Activated T-helper 1 cell treated with anti-CD3 and anti-CD28 coated beads, Interleukin-12 subunit alpha, Interleukin-12 subunit beta, Interleukin-2, Interleukin-4 antibody, amounts not matched to agents 30 ng/mL and 10 ng/mL and 1 ng/mL, durations not matched to agents 14 hours and 24 hours and 36 hours (primary cell): ENCODE measurements at regions of chr19 and their contacts with region 1.

Region 1: GRCh38 chr19:860481-861101 is 1.1 kb downstream of the CFD start:
- DNase-seq: peak; percentile 36
- H3K4me3 Mint-ChIP-seq: no peak overlapping the region
- H3K27ac Mint-ChIP-seq: no peak overlapping the region
- H3K4me1 Mint-ChIP-seq: peaks cover 7% of the 10 kb centered on the region
- H3K27me3 Mint-ChIP-seq: peaks cover 13% of the 10 kb centered on the region

Region 2: DNA sequence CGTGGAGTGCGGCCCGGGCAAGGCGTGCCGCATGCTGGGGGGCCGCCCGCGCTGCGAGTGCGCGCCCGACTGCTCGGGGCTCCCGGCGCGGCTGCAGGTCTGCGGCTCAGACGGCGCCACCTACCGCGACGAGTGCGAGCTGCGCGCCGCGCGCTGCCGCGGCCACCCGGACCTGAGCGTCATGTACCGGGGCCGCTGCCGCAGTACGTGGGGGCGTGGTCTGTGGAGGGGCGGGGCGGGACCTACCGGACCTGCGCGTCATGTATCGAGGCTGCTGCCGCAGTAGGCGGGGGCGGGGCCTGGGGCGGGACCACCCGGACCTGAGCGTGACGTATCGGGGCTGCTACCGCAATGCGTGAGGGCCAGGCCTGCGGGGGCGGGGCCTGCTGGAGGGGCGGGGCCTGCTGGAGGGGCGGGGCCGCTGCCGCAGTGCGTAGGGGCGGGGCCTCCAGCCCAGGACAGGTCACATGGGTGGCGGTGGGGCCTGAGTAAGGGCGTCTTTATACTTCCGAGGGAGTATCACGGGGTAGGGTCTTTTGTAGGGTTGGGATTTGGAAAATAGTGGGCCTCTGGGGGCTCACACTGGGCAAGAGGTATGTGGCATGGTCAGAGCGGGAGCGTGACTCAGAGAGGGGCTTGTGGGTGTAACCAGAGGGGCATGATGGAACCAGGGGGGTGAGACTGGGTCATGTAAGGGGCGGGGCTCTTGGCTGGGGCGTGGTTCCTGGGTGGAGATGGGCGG is 180.1 kb before region 1 on chr19:
- intact Hi-C with region 1: loop called (anchors 1 kb)
- DNase-seq: peak; percentile 95
- H3K4me3 Mint-ChIP-seq: peak overlapping the region; percentile 86
- H3K27ac Mint-ChIP-seq: peak overlapping the region; percentile 99
- H3K4me1 Mint-ChIP-seq: no peaks in the 10 kb centered on the region
- H3K27me3 Mint-ChIP-seq: peaks cover 5% of the 10 kb centered on the region

Region 3: DNA sequence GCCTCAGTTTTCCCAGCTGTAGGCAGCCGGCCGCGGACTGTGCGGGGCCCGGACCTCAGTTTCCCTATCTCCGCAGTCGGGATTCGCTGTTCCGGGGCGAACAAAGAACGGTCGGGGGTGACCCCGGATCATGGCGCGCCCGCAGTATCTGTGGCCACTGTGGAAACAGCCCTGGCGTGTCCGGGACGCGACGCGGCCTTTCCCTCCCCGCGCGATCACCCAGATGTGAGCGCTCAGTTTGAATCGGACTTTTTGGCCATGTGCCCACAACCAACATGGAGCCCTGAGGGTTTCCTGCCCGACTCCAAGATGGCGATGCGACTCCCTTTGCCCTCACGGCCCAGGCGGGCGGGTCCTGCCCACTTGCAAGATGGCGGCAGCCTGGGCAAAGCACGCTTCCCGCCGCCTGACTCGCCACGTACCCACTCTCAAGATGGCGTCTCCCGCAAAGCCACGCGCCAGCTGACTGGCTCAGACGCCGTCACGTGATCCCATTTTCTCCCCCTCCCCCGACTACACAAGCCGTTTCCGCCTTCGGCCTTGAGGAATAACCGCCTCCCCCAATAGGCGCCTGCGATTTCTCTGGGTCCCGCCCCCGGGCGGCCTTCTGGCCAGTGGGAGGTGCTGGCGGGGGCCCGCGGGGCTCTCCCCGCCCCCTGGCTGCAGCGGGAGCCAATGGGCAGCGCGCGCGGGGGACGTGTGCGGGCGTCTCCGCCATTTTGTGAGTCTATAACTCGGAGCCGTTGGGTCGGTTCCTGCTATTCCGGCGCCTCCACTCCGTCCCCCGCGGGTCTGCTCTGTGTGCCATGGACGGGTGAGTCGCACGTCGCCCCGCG is 63.7 kb before region 1 on chr19 and contains the start of gene PTBP1:
- intact Hi-C with region 1: loop called (anchors 5 kb)
- DNase-seq: peak; percentile 99
- H3K4me3 Mint-ChIP-seq: peak within 1 kb of the TSS; percentile 92
- H3K27ac Mint-ChIP-seq: peak within 1 kb of the TSS; percentile 91
- H3K4me1 Mint-ChIP-seq: peaks cover 19% of the 10 kb centered on the region
- H3K27me3 Mint-ChIP-seq: no peaks in the 10 kb centered on the region
- total RNA-seq, gene PTBP1: 735 and 829 TPM in 2 replicates

Region 4: DNA sequence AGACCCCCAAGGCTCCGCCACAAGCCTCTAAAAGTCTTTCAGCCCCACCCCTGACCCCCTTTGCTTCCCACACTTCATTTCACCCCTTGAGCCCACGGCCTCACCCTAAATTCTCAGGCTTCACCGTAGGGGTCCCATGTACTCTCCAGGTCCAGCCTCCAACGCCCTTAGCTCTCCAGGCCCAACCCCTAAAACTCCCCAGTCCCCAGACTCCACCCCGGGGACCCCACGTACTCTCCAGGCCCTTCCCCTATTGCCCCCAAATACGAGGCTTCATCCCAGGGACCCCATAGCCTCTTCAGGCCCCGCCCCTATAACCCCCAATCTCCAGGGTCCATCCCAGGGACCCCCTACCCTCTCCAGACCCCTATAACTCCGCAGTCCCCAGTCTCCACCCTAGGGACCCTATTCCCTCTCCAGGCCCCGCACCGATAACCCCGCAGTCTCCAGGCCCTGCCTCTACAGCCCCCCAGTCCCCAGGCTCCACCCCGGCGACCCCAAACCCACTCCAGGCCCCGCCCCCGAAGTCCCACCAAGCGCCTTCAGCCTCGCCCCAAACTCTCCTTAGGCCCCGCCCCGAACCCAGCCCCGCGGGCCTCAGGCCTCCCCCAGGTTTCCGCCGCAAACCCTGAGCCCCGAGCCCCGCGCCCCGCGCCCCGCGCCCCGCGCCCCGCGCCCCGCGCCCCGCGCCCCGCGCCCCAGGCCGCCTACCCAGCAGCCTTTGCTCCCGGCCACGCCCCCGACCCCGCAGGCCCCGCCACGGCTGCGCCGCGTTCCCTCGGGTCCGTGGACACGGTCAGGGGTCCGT is 31.9 kb after region 1 on chr19:
- intact Hi-C with region 1: loop called (anchors 1 kb)
- DNase-seq: no peak
- H3K4me3 Mint-ChIP-seq: peak overlapping the region; percentile 94
- H3K27ac Mint-ChIP-seq: peak overlapping the region; percentile 82
- H3K4me1 Mint-ChIP-seq: peaks cover 8% of the 10 kb centered on the region
- H3K27me3 Mint-ChIP-seq: no peaks in the 10 kb centered on the region

Region 5: DNA sequence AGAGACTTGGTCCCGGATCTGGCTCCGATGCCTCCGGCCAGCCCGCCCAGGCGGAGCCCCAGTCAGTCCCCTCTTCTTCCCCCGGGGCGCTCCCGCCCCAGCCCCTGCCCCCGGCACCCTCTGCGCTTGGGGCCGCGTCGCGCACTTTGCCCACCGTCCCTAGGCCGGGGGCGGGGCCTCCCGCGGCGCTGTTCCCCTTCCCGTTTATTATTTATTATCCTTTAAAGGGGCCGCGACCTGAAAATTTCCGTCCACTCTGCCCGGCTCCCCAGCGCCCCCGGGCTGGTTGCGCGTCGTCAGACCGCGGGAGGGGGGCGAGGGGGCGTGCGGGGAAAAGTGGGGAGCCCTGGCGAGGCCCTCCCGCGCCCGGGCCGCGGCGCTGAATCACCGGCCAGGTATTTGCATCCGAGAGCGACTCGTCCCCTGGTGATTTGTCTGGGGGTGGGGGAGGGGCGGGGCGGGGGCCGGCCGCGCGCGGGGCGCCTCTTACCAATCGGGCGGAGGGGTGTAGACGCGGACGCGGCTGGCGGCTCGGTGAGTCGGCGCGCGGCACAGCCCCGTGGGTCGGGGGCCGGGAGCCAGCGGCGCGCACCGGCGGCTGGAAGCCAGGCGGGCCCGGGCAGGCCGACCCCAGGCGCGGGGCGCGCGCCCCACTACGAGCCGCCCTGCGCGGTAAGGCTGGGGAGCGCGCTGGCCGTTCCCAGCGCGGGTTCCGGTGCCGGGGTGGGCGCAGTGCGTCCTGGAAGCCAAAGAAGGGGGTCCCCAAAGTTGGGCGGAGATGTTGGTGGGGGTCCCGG is 65.1 kb after region 1 on chr19 and contains the start of gene ARID3A:
- intact Hi-C with region 1: loop called (anchors 1 kb)
- DNase-seq: peak; percentile 74
- H3K4me3 Mint-ChIP-seq: peak within 1 kb of the TSS; percentile 82
- H3K27ac Mint-ChIP-seq: peak within 1 kb of the TSS; percentile 73
- H3K4me1 Mint-ChIP-seq: peaks cover 13% of the 10 kb centered on the region
- H3K27me3 Mint-ChIP-seq: no peaks in the 10 kb centered on the region
- total RNA-seq, gene ARID3A: 32.5 and 35.0 TPM in 2 replicates

Region 6: DNA sequence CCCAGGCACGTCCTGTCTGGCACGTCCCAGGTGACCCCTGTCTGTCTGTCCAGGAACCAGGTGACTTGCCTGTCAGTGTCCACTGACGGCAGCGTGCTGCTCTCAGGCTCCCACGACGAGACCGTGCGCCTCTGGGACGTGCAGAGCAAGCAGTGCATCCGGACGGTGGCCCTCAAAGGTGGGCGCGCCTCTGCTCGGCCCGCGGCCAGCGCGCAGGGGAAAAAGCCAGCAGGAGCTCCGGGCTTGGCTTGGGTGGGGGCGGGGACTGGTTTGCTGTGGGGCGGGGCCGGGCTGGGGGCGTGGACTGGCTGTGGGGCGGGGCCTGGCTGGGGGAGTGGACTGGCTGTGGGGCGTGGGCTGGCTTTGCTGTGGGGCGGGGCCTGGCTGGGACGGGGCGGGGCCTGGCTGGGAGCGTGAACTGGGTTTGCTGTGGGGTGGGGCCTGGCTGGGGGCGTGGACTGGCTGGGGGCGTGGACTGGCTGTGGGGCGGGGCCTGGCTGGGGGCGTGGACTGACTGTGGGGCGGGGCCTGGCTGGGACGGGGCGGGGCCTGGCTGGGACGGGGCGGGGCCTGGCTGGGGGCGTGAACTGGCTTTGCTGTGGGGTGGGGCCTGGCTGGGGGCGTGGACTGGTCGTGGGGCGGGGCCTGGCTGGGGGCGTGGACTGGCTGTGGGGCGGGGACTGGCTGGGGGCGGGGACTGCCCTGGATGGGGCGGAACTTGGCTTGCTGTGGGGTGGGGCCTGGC is 130.8 kb after region 1 on chr19:
- intact Hi-C with region 1: loop called (anchors 1 kb)
- DNase-seq: peak; percentile 26
- H3K4me3 Mint-ChIP-seq: no peak overlapping the region
- H3K27ac Mint-ChIP-seq: no peak overlapping the region
- H3K4me1 Mint-ChIP-seq: no peaks in the 10 kb centered on the region
- H3K27me3 Mint-ChIP-seq: peaks cover 1% of the 10 kb centered on the region

Region 7: DNA sequence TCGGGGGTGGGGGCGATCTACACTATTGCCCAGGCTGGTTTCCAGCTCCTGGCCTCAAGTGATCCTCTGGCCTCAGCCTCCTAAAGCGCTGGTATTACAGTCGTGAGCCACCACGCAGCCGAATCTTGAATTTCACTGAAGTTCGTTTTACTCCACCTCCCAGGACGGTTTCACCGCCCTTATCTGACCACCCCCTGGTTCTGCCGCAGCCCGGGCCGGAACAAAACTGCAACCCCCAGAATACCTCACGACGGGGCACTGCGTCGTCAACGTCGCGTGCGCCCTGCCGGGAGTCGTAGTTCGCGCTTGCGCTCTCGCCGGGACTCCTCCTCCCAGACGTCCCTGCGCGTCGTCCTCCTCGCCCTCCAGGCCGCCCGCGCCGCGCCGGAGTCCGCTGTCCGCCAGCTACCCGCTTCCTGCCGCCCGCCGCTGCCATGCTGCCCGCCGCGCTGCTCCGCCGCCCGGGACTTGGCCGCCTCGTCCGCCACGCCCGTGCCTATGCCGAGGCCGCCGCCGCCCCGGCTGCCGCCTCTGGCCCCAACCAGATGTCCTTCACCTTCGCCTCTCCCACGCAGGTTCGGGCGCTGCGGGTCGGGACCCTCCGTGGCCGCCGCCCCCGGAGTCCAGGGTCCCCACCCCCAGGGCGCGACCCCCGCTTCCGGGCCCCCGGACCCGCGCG is 381.0 kb after region 1 on chr19 and contains the start of gene ATP5F1D:
- intact Hi-C with region 1: loop called (anchors 5 kb)
- DNase-seq: peak; percentile 91
- H3K4me3 Mint-ChIP-seq: peak within 1 kb of the TSS; percentile 91
- H3K27ac Mint-ChIP-seq: peak within 1 kb of the TSS; percentile 84
- H3K4me1 Mint-ChIP-seq: peaks cover 27% of the 10 kb centered on the region
- H3K27me3 Mint-ChIP-seq: peaks cover 16% of the 10 kb centered on the region
- total RNA-seq, gene ATP5F1D: 234 and 239 TPM in 2 replicates